ENCODE measurements at regions of chr19 and their contacts with region 1.

Region 1: DNA sequence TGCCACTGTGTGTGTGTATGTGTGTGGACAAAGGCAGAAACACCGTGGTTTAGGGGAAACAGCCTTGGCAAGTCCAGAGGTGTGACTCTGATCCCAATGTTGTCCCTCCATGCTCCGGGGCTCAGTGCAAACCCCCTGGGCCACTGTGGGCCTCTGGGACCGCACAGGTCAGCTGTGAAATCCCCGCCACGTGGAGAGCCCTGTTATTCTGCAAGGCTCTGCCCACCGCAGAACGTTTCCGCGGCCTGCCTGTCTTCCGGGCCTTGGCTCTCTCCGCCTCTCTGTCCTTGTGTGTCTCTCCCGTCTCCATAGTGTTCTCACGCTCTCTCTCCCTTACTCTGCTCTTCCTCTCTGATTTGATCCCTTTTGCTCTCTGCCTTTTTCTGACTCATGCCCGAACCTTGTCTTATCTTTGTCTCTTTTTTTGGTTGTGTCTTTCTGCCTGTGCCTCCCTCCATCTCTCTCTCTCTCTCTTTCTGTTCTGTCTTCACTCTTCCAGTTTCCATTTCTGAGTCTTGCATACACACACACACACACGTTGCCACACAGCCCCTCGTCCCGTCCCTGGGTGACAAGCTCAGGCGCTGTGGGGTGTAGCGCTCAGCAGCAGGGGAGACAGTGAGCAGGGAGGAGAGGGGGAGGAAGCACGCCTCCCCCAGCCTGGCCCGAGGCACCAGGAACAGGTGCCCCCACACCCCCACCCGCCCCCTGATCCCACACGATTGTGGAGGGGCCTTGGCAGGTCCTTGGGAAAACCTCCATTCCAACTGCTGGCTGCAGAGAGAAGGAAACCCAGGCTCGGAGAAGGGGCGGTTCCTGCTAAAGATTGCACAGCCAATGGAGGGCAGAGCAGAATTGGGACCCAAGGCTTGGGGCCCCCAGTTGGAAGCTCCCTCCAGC is 3.0 kb downstream of the TTYH1 start:
- DNase-seq: peak; percentile 50
- ATAC-seq: peak; percentile 18; the same call in 1 of the 3 replicates
- H3K4me3 ChIP-seq: peak overlapping the region in 1 of 3 experiments; percentile 34; a peak in 2 of 6 replicates
- H3K27ac ChIP-seq: peak overlapping the region; percentile 44
- H3K4me1 ChIP-seq: peaks cover 69% of the 10 kb centered on the region
- H3K27me3 ChIP-seq: no peaks in the 10 kb centered on the region
- CTCF ChIP-seq: no peak
- EP300 ChIP-seq: no peak
- POLR2A ChIP-seq: no peak
- RAD21 ChIP-seq: no peak

Region 2: GRCh38 chr19:54430306-54431254 is 12.3 kb after region 1 on chr19:
- CTCF ChIA-PET with region 1: no interaction called
- POLR2A ChIA-PET with region 1: interaction called, 41 read pairs
- in situ Hi-C with region 1: no loop called
- intact Hi-C with region 1: no loop called
- DNase-seq: no peak
- ATAC-seq: peak; percentile 17
- H3K4me3 ChIP-seq: no peak overlapping the region
- H3K27ac ChIP-seq: no peak overlapping the region
- H3K4me1 ChIP-seq: no peaks in the 10 kb centered on the region
- H3K27me3 ChIP-seq: no peaks in the 10 kb centered on the region; a peak in 1 of 5 replicates
- CTCF ChIP-seq: peak; percentile 37
- EP300 ChIP-seq: no peak
- POLR2A ChIP-seq: no peak; a peak in 1 of 4 replicates
- RAD21 ChIP-seq: no peak

Region 3: DNA sequence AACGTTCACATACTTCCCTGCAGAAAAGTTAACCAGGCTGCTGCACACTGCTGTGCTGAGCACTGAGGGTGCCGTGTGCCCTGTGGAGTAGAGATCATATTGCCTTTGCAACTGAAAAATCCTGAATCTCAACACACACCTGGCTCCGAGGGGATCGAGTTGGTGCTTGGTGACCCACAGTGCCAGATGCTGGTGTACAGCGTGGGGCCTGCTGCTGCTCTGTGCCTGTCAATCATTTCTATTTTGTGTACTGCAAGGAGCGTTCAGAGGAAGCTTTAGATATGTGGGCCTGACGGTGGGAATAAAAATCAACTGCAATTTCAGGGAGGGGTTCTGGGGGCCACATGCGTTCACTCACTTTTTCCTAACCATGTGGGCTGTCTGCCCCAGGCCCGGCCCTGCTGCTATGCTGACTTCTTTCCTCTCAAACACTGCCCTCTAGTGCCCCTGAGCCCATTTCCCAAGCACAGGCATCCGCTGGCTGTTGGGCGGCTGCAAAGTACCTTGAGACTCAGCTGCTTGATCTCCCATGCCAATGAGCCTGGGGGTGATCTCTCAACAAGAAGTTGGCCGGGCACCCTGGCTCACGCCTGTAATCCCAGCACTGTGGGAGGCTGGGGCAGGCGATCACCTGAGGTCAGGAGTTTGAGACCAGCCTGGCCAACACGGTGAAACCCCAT is 21.0 kb after region 1 on chr19:
- CTCF ChIA-PET with region 1: interaction called, 3 read pairs
- POLR2A ChIA-PET with region 1: interaction called, 14 read pairs
- in situ Hi-C with region 1: no loop called
- intact Hi-C with region 1: no loop called
- DNase-seq: peak; percentile 56
- ATAC-seq: peak; percentile 94
- H3K4me3 ChIP-seq: no peak overlapping the region
- H3K27ac ChIP-seq: no peak overlapping the region
- H3K4me1 ChIP-seq: no peaks in the 10 kb centered on the region; the same call in 1 of the 2 replicates
- H3K27me3 ChIP-seq: no peaks in the 10 kb centered on the region
- CTCF ChIP-seq: peak; percentile 83
- EP300 ChIP-seq: no peak
- POLR2A ChIP-seq: no peak
- RAD21 ChIP-seq: peak; percentile 44; the same call in 1 of the 2 replicates

Region 4: GRCh38 chr19:54448774-54449700 is 30.8 kb after region 1 on chr19 and contains the start of gene LENG8:
- CTCF ChIA-PET with region 1: no interaction called
- POLR2A ChIA-PET with region 1: interaction called, 55 read pairs
- in situ Hi-C with region 1: no loop called
- intact Hi-C with region 1: no loop called
- DNase-seq: peak; percentile 91
- ATAC-seq: peak; percentile 93
- H3K4me3 ChIP-seq: peak within 1 kb of the TSS; percentile 81 to 93 (median 91)
- H3K27ac ChIP-seq: peak within 1 kb of the TSS; percentile 79
- H3K4me1 ChIP-seq: peaks cover 46% of the 10 kb centered on the region
- H3K27me3 ChIP-seq: no peaks in the 10 kb centered on the region; a peak in 2 of 5 replicates
- CTCF ChIP-seq: peak; percentile 17; the same call in 1 of the 2 replicates
- EP300 ChIP-seq: no peak
- POLR2A ChIP-seq: peak; percentile 94 to 99
- RAD21 ChIP-seq: 0 out of 2 replicates have a peak, but pooled peaks have one; percentile 37
- total RNA-seq, gene LENG8: 5.8 and 14.3 TPM in 2 replicates

Region 5: GRCh38 chr19:54463531-54464043 is 45.3 kb after region 1 on chr19 and contains the start of gene LENG9:
- CTCF ChIA-PET with region 1: no interaction called
- POLR2A ChIA-PET with region 1: interaction called, 32 read pairs
- in situ Hi-C with region 1: no loop called
- intact Hi-C with region 1: no loop called
- DNase-seq: peak; percentile 98
- ATAC-seq: peak; percentile 74
- H3K4me3 ChIP-seq: peak within 1 kb of the TSS; percentile 72 to 80 (median 77)
- H3K27ac ChIP-seq: peak within 1 kb of the TSS; percentile 96
- H3K4me1 ChIP-seq: peaks cover 21% of the 10 kb centered on the region
- H3K27me3 ChIP-seq: no peaks in the 10 kb centered on the region
- CTCF ChIP-seq: no peak
- EP300 ChIP-seq: no peak
- POLR2A ChIP-seq: peak; percentile 85 to 95
- RAD21 ChIP-seq: 0 out of 2 replicates have a peak, but pooled peaks have one; percentile 9
- total RNA-seq, gene LENG9: 1.5 and 2.9 TPM in 2 replicates

Region 6: DNA sequence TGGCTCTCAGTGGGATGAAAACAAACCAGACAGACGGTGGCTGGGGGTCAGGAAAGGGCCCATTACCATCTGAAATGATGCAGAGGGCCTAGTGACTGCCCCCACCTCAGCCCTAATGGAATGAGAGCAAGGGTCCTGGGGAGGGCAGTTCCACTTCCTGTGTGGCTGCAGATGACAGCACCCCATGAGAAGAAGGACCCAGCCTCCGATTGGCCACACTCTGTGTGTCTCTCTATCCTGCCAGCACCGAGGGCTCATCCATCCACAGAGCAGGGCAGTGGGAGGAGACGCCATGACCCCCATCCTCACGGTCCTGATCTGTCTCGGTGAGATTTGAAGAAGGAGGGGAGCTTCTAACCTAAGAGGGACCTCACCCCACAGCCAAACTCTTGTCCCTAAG is 212.5 kb after region 1 on chr19:
- CTCF ChIA-PET with region 1: no interaction called
- POLR2A ChIA-PET with region 1: no interaction called
- in situ Hi-C with region 1: no loop called
- intact Hi-C with region 1: no loop called
- DNase-seq: no peak
- ATAC-seq: no peak
- H3K4me3 ChIP-seq: no peak overlapping the region
- H3K27ac ChIP-seq: no peak overlapping the region
- H3K4me1 ChIP-seq: no peaks in the 10 kb centered on the region
- H3K27me3 ChIP-seq: peaks cover 1 to 10% of the 10 kb centered on the region in 2 experiments; a peak in 2 of 5 replicates
- CTCF ChIP-seq: no peak
- EP300 ChIP-seq: no peak
- POLR2A ChIP-seq: no peak
- RAD21 ChIP-seq: no peak